CD4-positive, alpha-beta T cell (primary cell): ENCODE measurements at regions of chr2 and their contacts with region 1.

Region 1: GRCh38 chr2:65040400-65041261 is 15.6 kb upstream of the CEP68 start:
- DNase-seq: peak; percentile 60 to 88 (median 69)
- ATAC-seq: peak; percentile 100
- H3K4me3 ChIP-seq: no peak overlapping the region
- H3K4me3 Mint-ChIP-seq: peak overlapping the region; percentile 34
- H3K27ac ChIP-seq: no peak overlapping the region
- H3K27ac Mint-ChIP-seq: no peak overlapping the region
- H3K4me1 ChIP-seq: peaks cover 5% of the 10 kb centered on the region
- H3K4me1 Mint-ChIP-seq: peaks cover 13% of the 10 kb centered on the region
- H3K27me3 ChIP-seq: no peaks in the 10 kb centered on the region
- H3K27me3 Mint-ChIP-seq: no peaks in the 10 kb centered on the region
- CTCF ChIP-seq: peak; percentile 95

Region 2: DNA sequence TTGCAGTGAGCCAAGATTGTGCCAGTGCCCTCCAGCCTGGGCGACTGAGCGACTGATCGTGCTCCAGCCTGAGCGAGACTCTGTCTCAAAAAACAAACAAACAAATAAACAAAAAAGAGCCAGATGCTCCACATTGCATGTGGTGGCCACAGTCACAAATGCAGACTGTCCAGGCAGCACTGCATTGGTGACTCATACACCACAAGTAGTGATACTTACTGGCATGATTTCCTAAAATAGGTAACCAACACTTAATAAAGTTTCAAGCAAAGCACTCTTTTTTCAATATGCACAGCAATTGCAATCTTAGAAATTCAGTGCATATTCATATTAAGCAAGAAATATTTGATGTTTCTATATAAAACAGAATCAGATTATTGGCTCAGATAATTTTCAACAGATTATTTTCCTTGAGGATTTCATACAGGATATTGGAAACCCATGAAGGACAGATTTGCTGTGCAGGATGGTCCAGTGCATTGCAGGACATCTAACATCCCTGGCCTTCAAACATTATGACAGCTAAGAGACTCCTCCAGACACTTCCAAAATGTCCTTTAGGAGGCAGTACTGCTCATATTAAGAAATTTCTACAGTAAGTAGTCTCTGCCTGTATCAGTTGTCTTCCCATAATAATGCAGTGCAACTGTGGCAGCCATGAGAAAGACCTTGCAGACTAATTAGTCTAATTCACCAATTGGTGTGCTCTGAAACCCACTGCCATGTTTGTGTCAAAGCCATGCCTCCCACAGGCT is 61.9 kb before region 1 on chr2:
- CTCF ChIA-PET with region 1: interaction called, 4 read pairs
- POLR2A ChIA-PET with region 1: no interaction called
- intact Hi-C with region 1: loop called (anchors 2 kb)
- DNase-seq: peak in 3 of 14 experiments; percentile 33 to 46 (median 40)
- ATAC-seq: peak; percentile 37
- H3K4me3 ChIP-seq: no peak overlapping the region
- H3K4me3 Mint-ChIP-seq: no peak overlapping the region
- H3K27ac ChIP-seq: no peak overlapping the region
- H3K27ac Mint-ChIP-seq: no peak overlapping the region
- H3K4me1 ChIP-seq: no peaks in the 10 kb centered on the region
- H3K4me1 Mint-ChIP-seq: no peaks in the 10 kb centered on the region
- H3K27me3 ChIP-seq: no peaks in the 10 kb centered on the region
- H3K27me3 Mint-ChIP-seq: no peaks in the 10 kb centered on the region
- CTCF ChIP-seq: peak; percentile 36

Region 3: DNA sequence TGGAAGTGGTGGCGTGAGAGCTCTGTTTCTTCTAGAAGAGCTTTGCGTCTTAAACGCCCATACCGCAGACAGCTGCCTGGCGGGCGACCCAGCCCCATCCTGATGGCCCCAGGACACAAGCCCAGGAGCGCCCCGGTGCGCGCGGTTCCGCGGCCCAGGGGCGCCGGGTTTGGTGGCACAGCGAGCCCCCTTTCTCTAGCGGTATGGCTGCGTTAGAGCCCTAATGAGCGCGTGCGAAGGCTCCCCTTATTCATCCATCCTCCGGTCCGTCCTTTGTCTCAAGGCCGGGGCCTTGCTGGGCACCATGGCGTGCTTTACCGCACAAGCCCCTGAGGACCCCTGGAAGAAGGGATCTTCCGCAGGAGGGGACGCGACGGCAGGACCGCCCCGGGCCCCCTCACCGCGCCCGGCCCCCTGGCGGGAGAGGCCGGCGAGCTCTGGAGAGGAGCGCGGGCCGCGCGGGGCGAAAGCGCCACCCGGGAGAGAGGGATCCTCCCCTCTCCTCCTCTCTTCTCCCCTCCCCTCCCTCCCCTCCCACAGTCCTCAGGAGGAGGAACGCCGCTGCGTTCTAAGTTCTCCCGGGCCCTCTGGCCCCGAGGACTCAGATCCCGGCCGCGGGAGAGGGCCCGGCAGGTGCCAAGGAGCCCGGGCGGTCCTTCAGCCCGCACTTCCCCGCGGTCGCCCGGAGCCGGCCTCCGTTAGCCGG is 52.1 kb before region 1 on chr2:
- CTCF ChIA-PET with region 1: no interaction called
- POLR2A ChIA-PET with region 1: no interaction called
- intact Hi-C with region 1: loop called in 1 of 2 experiments (anchors 2 kb)
- DNase-seq: peak in 13 of 14 experiments; percentile 7 to 88 (median 43)
- ATAC-seq: peak; percentile 48
- H3K4me3 ChIP-seq: peak overlapping the region; percentile 62
- H3K4me3 Mint-ChIP-seq: peak overlapping the region; percentile 84
- H3K27ac ChIP-seq: no peak overlapping the region
- H3K27ac Mint-ChIP-seq: peak overlapping the region; percentile 6
- H3K4me1 ChIP-seq: peaks cover 25% of the 10 kb centered on the region
- H3K4me1 Mint-ChIP-seq: peaks cover 29% of the 10 kb centered on the region
- H3K27me3 ChIP-seq: no peaks in the 10 kb centered on the region
- H3K27me3 Mint-ChIP-seq: peaks cover 4% of the 10 kb centered on the region
- CTCF ChIP-seq: no peak